SK-N-SH (cell line): ENCODE measurements at regions of chr9 and their contacts with region 1.

Region 1: DNA sequence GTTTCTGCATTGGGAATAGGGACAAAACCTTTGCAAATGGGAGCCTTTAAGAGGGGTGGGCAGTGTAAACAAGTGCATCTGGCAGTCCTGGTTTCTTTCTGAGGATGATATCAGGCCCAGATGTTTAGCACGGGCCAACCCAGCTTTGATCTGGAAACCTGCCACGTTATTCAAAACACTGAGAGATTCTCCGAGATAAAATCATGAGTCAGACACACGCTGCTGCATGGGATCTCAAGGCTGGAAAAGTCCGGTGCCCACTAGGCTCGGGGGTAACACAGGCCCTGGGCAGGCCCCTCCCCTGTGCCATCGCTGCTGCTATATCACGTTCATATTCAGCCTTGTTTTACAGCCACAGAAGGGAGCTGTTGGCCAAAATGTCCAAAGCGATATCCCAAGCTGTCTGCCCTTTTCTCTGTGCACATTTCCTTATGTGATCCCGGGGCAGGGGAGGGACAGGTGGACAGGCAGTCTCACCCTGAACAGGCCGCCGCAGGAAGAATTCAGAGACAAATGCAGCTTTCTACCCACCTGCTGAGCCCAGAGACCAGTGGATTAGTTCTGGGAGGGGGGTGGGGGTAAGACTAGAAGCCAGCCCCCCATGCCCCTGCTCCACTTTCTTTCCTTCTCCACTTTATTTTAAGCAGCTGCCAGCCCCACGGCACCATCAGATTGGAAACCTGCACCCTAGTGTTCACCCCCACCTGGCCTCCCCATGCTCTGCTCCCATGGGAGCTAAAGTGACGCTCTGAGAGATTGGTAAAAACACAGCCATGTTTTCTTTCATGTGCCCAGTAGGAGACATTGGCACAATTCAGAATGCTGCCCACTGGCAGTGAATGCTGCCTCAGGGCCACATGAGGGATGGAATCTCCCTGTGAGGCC is 63.1 kb downstream of the TMOD1 start:
- DNase-seq: peak; percentile 83
- H3K4me3 ChIP-seq: peak overlapping the region; percentile 10 to 16; a peak in 2 of 4 replicates
- H3K27ac ChIP-seq: peak overlapping the region in 1 of 2 experiments; percentile 98; a peak in 2 of 4 replicates
- H3K4me1 ChIP-seq: peaks cover 0 to 84% of the 10 kb centered on the region in 2 experiments; a peak in 2 of 4 replicates
- H3K27me3 ChIP-seq: no peaks in the 10 kb centered on the region
- CTCF ChIP-seq: no peak
- EP300 ChIP-seq: peak; percentile 15 to 97; a peak in 3 of 4 replicates
- RAD21 ChIP-seq: peak; percentile 57

Region 2: GRCh38 chr9:97367729-97368128 is 196.8 kb before region 1 on chr9:
- CTCF ChIA-PET with region 1: no interaction called
- POLR2A ChIA-PET with region 1: no interaction called
- DNase-seq: no peak
- H3K4me3 ChIP-seq: no peak overlapping the region
- H3K27ac ChIP-seq: no peak overlapping the region
- H3K4me1 ChIP-seq: no peaks in the 10 kb centered on the region
- H3K27me3 ChIP-seq: no peaks in the 10 kb centered on the region
- CTCF ChIP-seq: no peak
- EP300 ChIP-seq: no peak
- RAD21 ChIP-seq: no peak

Region 3: GRCh38 chr9:97550386-97550785 is 14.1 kb before region 1 on chr9:
- CTCF ChIA-PET with region 1: no interaction called
- POLR2A ChIA-PET with region 1: no interaction called
- DNase-seq: no peak
- H3K4me3 ChIP-seq: no peak overlapping the region
- H3K27ac ChIP-seq: no peak overlapping the region
- H3K4me1 ChIP-seq: peaks cover 0 to 23% of the 10 kb centered on the region in 2 experiments; a peak in 1 of 4 replicates
- H3K27me3 ChIP-seq: no peaks in the 10 kb centered on the region
- CTCF ChIP-seq: no peak
- EP300 ChIP-seq: no peak
- RAD21 ChIP-seq: no peak

Region 4: GRCh38 chr9:97575673-97576200 is 11.2 kb after region 1 on chr9:
- CTCF ChIA-PET with region 1: interaction called, 10 read pairs
- POLR2A ChIA-PET with region 1: interaction called, 4 read pairs
- DNase-seq: no peak
- H3K4me3 ChIP-seq: no peak overlapping the region
- H3K27ac ChIP-seq: no peak overlapping the region
- H3K4me1 ChIP-seq: peaks cover 0 to 16% of the 10 kb centered on the region in 2 experiments; a peak in 1 of 4 replicates
- H3K27me3 ChIP-seq: no peaks in the 10 kb centered on the region
- CTCF ChIP-seq: no peak
- EP300 ChIP-seq: no peak
- RAD21 ChIP-seq: no peak